Ascending aorta (tissue), 2 donors: ENCODE measurements at regions of chr1 and their contacts with region 1.

Region 1: DNA sequence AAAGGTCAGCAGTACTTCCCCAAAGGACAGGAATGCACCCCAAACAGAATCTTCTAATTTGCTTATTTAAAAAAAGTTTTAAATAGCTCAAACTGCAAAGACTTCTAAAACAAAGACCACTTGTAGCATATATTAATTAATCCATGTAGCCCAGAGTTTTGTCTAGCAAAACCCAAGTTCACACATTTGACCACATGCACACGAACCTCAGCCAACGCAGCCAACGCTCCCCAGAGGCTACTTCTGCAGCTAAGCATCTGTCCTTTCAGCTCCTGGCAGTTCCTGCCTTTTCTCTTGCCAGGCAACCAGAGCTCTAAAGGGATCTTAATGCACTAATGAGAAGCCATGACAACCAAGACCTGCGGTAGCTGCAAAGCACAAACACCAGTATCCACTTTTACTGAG is 89.6 kb downstream of the RERE start:
- DNase-seq: no peak
- H3K4me3 ChIP-seq: no peak overlapping the region
- H3K27ac ChIP-seq: no peak overlapping the region
- H3K4me1 ChIP-seq: no peaks in the 10 kb centered on the region
- H3K27me3 ChIP-seq: no peaks in the 10 kb centered on the region
- CTCF ChIP-seq: no peak

Region 2: GRCh38 chr1:8560611-8561544 is 166.9 kb before region 1 on chr1:
- intact Hi-C with region 1: loop called (anchors 2 kb)
- DNase-seq: no peak
- H3K4me3 ChIP-seq: no peak overlapping the region
- H3K27ac ChIP-seq: no peak overlapping the region
- H3K4me1 ChIP-seq: peaks cover 0 to 5% of the 10 kb centered on the region in 2 donors
- H3K27me3 ChIP-seq: no peaks in the 10 kb centered on the region
- CTCF ChIP-seq: peak; percentile 84 to 87 (median 87)

Region 3: DNA sequence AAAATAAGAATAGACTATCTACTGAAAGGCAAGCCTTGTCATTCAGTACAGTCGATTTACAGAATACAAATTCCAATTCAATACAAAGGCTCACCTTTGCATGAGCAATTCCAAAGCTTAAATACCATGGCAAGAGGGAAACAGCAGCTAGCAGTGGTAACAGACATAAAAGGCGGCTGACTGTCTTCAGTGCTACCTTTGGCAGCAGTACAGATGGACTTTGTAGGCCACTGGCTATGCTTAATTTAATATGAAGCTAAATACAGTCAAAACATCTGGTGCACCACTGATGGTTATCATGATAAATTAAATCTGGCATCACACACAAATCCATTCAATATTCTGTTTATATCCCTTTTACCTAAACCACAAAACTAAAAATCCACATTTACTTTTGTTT is 27.2 kb after region 1 on chr1:
- intact Hi-C with region 1: no loop called
- DNase-seq: no peak
- H3K4me3 ChIP-seq: no peak overlapping the region
- H3K27ac ChIP-seq: no peak overlapping the region
- H3K4me1 ChIP-seq: no peaks in the 10 kb centered on the region
- H3K27me3 ChIP-seq: no peaks in the 10 kb centered on the region
- CTCF ChIP-seq: no peak